ENCODE measurements at regions of chr1 and their contacts with region 1.

Region 1: GRCh38 chr1:248924696-248925532 is 18.9 kb downstream of the PGBD2 start:
- DNase-seq: peak; percentile 43
- H3K4me3 ChIP-seq: no peak overlapping the region
- H3K27ac ChIP-seq: no peak overlapping the region
- H3K4me1 ChIP-seq: peaks cover 4% of the 10 kb centered on the region
- H3K27me3 ChIP-seq: no peaks in the 10 kb centered on the region
- CTCF ChIP-seq: peak; percentile 64 to 72

Region 2: DNA sequence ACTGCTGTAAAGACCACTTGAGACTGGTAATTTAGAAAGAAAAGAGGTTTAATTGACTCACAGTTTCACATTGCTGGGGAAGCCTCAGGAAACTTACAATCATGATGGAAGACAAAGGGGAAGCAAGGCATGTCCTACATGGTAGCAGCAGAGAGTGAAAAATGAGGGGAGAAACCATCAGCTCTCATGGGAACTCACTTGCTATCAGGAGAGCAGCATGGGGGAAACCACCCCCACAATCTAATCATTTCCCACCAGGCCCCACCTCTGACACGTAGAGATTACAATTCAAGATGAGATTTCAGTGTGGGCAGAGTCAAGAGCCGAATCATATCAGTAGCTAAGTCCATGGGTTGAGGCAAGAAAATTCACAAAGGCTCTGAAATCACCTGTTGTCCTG is 145.6 kb before region 1 on chr1:
- CTCF ChIA-PET with region 1: no interaction called
- dilution Hi-C with region 1: no loop called
- in situ Hi-C with region 1: no loop called
- intact Hi-C with region 1: no loop called
- DNase-seq: no peak
- H3K4me3 ChIP-seq: no peak overlapping the region
- H3K27ac ChIP-seq: no peak overlapping the region
- H3K4me1 ChIP-seq: no peaks in the 10 kb centered on the region
- H3K27me3 ChIP-seq: no peaks in the 10 kb centered on the region
- CTCF ChIP-seq: no peak

Region 3: DNA sequence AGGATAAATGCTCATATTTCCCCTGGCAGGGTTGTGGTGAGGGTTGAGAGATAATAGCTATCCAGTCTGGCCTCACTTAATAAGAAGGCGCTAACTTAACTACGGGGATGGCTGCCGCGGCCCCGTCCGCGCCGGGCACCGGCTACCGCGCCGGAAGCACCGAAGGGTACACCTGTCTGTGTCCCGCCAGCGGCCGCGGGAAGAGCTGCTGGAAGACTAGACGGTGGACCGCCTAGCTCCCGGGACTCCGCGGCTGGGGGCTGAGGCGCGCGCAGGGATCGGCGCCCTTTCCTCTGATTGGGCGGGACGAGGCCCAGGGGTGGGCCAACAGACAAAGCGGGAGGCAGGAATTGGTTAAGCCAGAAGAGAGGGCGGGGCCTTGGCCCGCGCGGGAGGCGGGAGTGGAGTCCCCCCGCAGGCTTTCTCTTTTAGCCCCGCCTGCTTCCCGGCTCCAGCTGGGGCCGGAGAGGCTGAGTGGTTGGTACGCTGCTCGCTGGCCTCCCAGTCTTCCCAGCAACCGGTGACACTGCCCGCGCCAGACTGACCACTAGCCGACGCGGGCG is 87.0 kb before region 1 on chr1 and contains the start of gene ZNF672:
- CTCF ChIA-PET with region 1: no interaction called
- dilution Hi-C with region 1: no loop called
- in situ Hi-C with region 1: no loop called
- intact Hi-C with region 1: loop called (anchors 1 kb)
- DNase-seq: peak; percentile 97
- H3K4me3 ChIP-seq: peak within 1 kb of the TSS; percentile 76 to 94 (median 89)
- H3K27ac ChIP-seq: peak within 1 kb of the TSS; percentile 87
- H3K4me1 ChIP-seq: peaks cover 31% of the 10 kb centered on the region
- H3K27me3 ChIP-seq: no peaks in the 10 kb centered on the region
- CTCF ChIP-seq: no peak
- total RNA-seq, gene ZNF672: 20.5 to 22.5 TPM

Region 4: GRCh38 chr1:248873409-248873992 is 51.4 kb before region 1 on chr1:
- CTCF ChIA-PET with region 1: no interaction called
- dilution Hi-C with region 1: no loop called
- in situ Hi-C with region 1: no loop called
- intact Hi-C with region 1: no loop called
- DNase-seq: peak; percentile 95
- H3K4me3 ChIP-seq: peak overlapping the region; percentile 66 to 83 (median 73)
- H3K27ac ChIP-seq: peak overlapping the region; percentile 75
- H3K4me1 ChIP-seq: peaks cover 3% of the 10 kb centered on the region
- H3K27me3 ChIP-seq: no peaks in the 10 kb centered on the region
- CTCF ChIP-seq: peak in 1 of 2 donors; percentile 14